BJ (cell line): ENCODE measurements at regions of chr11 and their contacts with region 1.

Region 1: DNA sequence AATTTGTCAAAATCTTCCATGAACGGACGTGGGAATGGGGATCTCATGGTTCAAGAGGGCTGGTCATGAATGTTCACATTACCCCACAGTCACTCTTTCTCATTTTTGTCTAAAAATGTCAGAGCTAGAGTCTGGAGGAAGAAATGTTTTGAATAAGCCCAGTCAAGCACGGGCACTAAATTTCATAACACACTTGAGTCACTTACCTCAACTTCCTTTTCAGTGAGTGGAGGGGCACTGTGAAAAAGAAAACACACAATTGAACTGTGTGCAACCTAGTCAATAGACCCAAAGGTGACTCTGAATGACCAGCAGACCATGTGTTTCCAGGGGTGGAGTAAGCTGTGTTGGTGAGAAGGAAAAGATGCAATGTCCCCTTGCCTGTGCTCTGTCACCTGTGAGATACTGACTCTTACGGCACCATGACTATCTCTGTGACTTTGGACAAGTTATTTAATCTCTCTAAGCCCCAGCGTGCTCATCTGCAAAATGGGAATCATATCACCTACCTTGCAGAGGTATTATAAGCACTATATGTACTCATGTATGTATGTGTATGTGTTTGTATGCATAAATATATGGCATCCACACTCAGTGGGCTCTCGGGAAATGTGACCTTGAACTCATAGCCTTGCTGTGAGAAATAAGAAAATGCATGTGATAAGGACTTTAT is 38.2 kb upstream of the LYVE1 start:
- DNase-seq: no peak
- H3K4me3 ChIP-seq: no peak overlapping the region
- H3K27me3 ChIP-seq: no peaks in the 10 kb centered on the region
- CTCF ChIP-seq: no peak

Region 2: GRCh38 chr11:9601037-9601875 is 1005.4 kb before region 1 on chr11:
- CTCF ChIA-PET with region 1: no interaction called
- POLR2A ChIA-PET with region 1: no interaction called
- DNase-seq: no peak
- H3K4me3 ChIP-seq: no peak overlapping the region
- H3K27me3 ChIP-seq: no peaks in the 10 kb centered on the region
- CTCF ChIP-seq: no peak

Region 3: DNA sequence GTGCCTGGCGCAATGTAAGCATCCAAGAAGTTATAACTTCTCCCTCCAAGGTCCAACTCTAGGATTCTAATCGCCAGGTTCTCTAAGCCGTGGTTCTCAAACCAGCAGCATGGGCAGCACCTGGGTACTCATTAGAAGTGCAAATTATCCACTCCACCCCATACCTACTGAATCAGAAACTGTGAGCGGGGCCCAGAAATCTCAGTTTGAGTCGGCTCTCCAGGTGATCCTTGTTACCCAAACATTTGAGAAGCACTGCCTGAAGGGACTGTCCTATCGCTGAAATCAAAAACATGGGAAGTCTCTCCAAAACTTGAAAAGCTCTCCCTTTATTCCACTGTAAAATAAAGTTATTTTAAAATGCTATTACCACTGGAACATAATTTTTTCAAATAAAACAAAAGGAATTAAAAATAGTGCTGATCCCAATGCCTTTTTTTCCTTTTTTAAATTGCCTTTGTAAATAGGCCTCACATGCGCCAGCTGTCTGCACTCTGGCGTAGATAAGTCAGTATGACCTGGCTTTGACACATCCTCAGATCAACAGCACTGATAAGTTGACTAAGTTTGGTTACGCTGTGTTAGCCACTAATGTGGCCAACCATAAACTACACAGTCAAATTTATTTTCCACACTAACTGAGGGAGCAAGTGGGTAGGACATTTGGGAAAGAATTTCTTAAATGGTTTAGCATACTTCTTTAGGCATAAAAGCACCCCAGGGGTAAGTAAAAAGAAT is 136.0 kb after region 1 on chr11:
- CTCF ChIA-PET with region 1: no interaction called
- POLR2A ChIA-PET with region 1: interaction called, 11 read pairs
- DNase-seq: peak; percentile 74
- H3K4me3 ChIP-seq: no peak overlapping the region
- H3K27me3 ChIP-seq: no peaks in the 10 kb centered on the region
- CTCF ChIP-seq: no peak